ENCODE measurements at regions of chr6 and their contacts with region 1.

Region 1: GRCh38 chr6:107820338-107821261 is 3.5 kb downstream of the SCML4 start:
- DNase-seq: peak; percentile 15 to 78 (median 54)
- ATAC-seq: no peak
- H3K4me3 ChIP-seq: peak overlapping the region; percentile 72 to 92
- H3K4me3 Mint-ChIP-seq: peak overlapping the region; percentile 92
- H3K27ac ChIP-seq: peak overlapping the region; percentile 81 to 90
- H3K27ac Mint-ChIP-seq: peak overlapping the region; percentile 96
- H3K4me1 ChIP-seq: peaks cover 65% of the 10 kb centered on the region
- H3K4me1 Mint-ChIP-seq: peaks cover 82% of the 10 kb centered on the region
- H3K27me3 ChIP-seq: no peaks in the 10 kb centered on the region
- H3K27me3 Mint-ChIP-seq: no peaks in the 10 kb centered on the region
- CTCF ChIP-seq: no peak

Region 2: GRCh38 chr6:106125925-106126435 is 1694.6 kb before region 1 on chr6:
- CTCF ChIA-PET with region 1: no interaction called
- POLR2A ChIA-PET with region 1: no interaction called
- intact Hi-C with region 1: no loop called
- DNase-seq: peak in 3 of 9 experiments; percentile 42 to 50 (median 50)
- ATAC-seq: peak; percentile 65
- H3K4me3 ChIP-seq: peak overlapping the region in 1 of 2 experiments; percentile 3
- H3K4me3 Mint-ChIP-seq: peak overlapping the region; percentile 71
- H3K27ac ChIP-seq: no peak overlapping the region
- H3K27ac Mint-ChIP-seq: peak overlapping the region; percentile 27
- H3K4me1 ChIP-seq: no peaks in the 10 kb centered on the region
- H3K4me1 Mint-ChIP-seq: peaks cover 8% of the 10 kb centered on the region
- H3K27me3 ChIP-seq: no peaks in the 10 kb centered on the region
- H3K27me3 Mint-ChIP-seq: peaks cover 29% of the 10 kb centered on the region
- CTCF ChIP-seq: no peak

Region 3: GRCh38 chr6:107716688-107717089 is 103.9 kb before region 1 on chr6:
- CTCF ChIA-PET with region 1: interaction called, 4 read pairs
- POLR2A ChIA-PET with region 1: interaction called, 11 read pairs
- intact Hi-C with region 1: loop called in 1 of 2 experiments (anchors 1 kb)
- DNase-seq: peak; percentile 46 to 95 (median 76)
- ATAC-seq: peak; percentile 85
- H3K4me3 ChIP-seq: no peak overlapping the region
- H3K4me3 Mint-ChIP-seq: peak overlapping the region; percentile 68
- H3K27ac ChIP-seq: peak overlapping the region in 1 of 2 experiments; percentile 79
- H3K27ac Mint-ChIP-seq: peak overlapping the region; percentile 91
- H3K4me1 ChIP-seq: peaks cover 54% of the 10 kb centered on the region
- H3K4me1 Mint-ChIP-seq: peaks cover 77% of the 10 kb centered on the region
- H3K27me3 ChIP-seq: no peaks in the 10 kb centered on the region
- H3K27me3 Mint-ChIP-seq: no peaks in the 10 kb centered on the region
- CTCF ChIP-seq: no peak

Region 4: GRCh38 chr6:107740496-107741190 is 80.0 kb before region 1 on chr6:
- CTCF ChIA-PET with region 1: interaction called, 11 read pairs
- POLR2A ChIA-PET with region 1: interaction called, 83 read pairs
- intact Hi-C with region 1: loop called (anchors 1 to 2 kb)
- DNase-seq: peak in 3 of 9 experiments; percentile 39 to 65 (median 46)
- ATAC-seq: peak; percentile 15
- H3K4me3 ChIP-seq: peak overlapping the region; percentile 30 to 41
- H3K4me3 Mint-ChIP-seq: peak overlapping the region; percentile 83
- H3K27ac ChIP-seq: peak overlapping the region; percentile 50 to 83
- H3K27ac Mint-ChIP-seq: peak overlapping the region; percentile 97
- H3K4me1 ChIP-seq: peaks cover 70% of the 10 kb centered on the region
- H3K4me1 Mint-ChIP-seq: peaks cover 81% of the 10 kb centered on the region
- H3K27me3 ChIP-seq: no peaks in the 10 kb centered on the region
- H3K27me3 Mint-ChIP-seq: no peaks in the 10 kb centered on the region
- CTCF ChIP-seq: no peak

Region 5: DNA sequence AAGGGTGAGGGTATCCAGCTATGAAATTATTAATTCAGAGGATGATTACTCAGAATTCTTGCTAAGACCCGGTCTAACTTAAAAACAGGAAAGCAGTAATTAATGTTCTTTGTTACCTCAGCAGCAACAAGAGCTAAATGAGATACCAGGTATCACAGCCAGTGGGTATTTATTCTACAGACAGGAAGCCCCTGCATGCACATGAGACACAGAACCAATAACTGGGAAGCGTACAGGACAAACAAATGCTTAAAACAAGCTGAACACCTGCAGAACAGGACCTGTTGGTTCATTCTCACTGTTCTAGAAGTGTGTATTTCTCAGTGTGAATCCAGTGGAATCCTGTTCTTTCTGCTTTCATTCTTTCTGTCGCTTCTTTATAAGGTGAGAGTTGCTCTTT is 27.4 kb before region 1 on chr6:
- CTCF ChIA-PET with region 1: interaction called, 11 read pairs
- POLR2A ChIA-PET with region 1: interaction called, 83 read pairs
- intact Hi-C with region 1: loop called in 1 of 2 experiments (anchors 2 kb)
- DNase-seq: peak in 1 of 9 experiments; percentile 38
- ATAC-seq: peak; percentile 52
- H3K4me3 ChIP-seq: no peak overlapping the region
- H3K4me3 Mint-ChIP-seq: peak overlapping the region; percentile 55
- H3K27ac ChIP-seq: peak overlapping the region; percentile 21 to 45
- H3K27ac Mint-ChIP-seq: peak overlapping the region; percentile 84
- H3K4me1 ChIP-seq: peaks cover 64% of the 10 kb centered on the region
- H3K4me1 Mint-ChIP-seq: peaks cover 82% of the 10 kb centered on the region
- H3K27me3 ChIP-seq: no peaks in the 10 kb centered on the region
- H3K27me3 Mint-ChIP-seq: no peaks in the 10 kb centered on the region
- CTCF ChIP-seq: peak; percentile 16

Region 6: GRCh38 chr6:107832151-107833056 is 11.8 kb after region 1 on chr6:
- CTCF ChIA-PET with region 1: interaction called, 5 read pairs
- POLR2A ChIA-PET with region 1: interaction called, 10 read pairs
- intact Hi-C with region 1: no loop called
- DNase-seq: no peak
- ATAC-seq: no peak
- H3K4me3 ChIP-seq: no peak overlapping the region
- H3K4me3 Mint-ChIP-seq: no peak overlapping the region
- H3K27ac ChIP-seq: no peak overlapping the region
- H3K27ac Mint-ChIP-seq: no peak overlapping the region
- H3K4me1 ChIP-seq: peaks cover 15% of the 10 kb centered on the region
- H3K4me1 Mint-ChIP-seq: peaks cover 22% of the 10 kb centered on the region
- H3K27me3 ChIP-seq: no peaks in the 10 kb centered on the region
- H3K27me3 Mint-ChIP-seq: no peaks in the 10 kb centered on the region
- CTCF ChIP-seq: no peak

Region 7: GRCh38 chr6:107894821-107895396 is 74.3 kb after region 1 on chr6:
- CTCF ChIA-PET with region 1: no interaction called
- POLR2A ChIA-PET with region 1: no interaction called
- intact Hi-C with region 1: no loop called
- DNase-seq: no peak
- ATAC-seq: no peak
- H3K4me3 ChIP-seq: no peak overlapping the region
- H3K4me3 Mint-ChIP-seq: no peak overlapping the region
- H3K27ac ChIP-seq: no peak overlapping the region
- H3K27ac Mint-ChIP-seq: no peak overlapping the region
- H3K4me1 ChIP-seq: no peaks in the 10 kb centered on the region
- H3K4me1 Mint-ChIP-seq: no peaks in the 10 kb centered on the region
- H3K27me3 ChIP-seq: no peaks in the 10 kb centered on the region
- H3K27me3 Mint-ChIP-seq: no peaks in the 10 kb centered on the region
- CTCF ChIP-seq: no peak